Heart right ventricle (tissue), 16 donors: ENCODE measurements at regions of chr1 and their contacts with region 1.

Region 1: DNA sequence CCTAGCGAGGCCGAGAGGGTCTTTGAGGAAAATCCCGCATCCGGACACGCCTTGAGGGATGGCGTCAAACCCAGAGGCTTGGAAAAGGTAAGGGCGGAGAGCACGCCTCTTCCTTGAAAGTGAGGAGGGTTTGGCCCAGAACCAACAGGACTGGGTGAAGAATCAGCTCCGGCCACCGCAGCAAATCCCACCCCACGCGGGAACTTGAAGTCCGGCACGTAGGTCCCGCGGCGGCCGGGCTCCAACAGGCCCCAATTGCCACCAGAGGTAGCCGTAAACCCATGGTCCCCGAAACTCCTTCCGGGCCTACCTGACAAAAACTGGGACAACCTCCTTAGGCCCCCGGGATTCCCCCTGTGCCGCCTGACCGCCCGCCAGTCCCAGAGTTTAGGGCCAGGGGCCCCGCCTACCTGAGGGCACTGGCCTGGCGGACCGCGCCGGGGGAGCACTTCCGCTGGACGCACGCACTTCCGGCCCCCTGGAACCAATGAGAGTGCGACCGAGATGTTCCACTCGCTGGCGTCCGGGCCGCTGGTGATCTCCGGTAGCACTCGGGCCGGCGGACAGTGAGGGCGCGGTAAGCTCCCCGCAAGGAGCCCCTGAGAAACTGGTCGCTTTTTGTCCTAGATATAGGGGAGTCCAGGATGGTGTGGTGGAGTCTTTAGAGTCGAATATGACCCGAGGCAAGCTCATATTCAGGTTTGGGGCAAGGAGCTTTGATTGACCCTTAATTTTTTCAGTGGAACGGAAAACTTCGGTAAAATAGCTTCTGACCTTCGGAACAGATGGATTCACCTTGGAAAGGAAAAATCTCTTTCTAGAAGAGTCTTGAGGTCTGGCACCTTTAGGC is at the starts of genes LZIC and NMNAT1:
- DNase-seq: peak; percentile 92 to 93
- ATAC-seq: peak; percentile 99 to 100 (median 99)
- H3K4me3 ChIP-seq: peak within 1 kb of the TSS; percentile 68 to 93 (median 78)
- H3K27ac ChIP-seq: peak within 1 kb of the TSS; percentile 33 to 97 (median 92)
- H3K4me1 ChIP-seq: peaks cover 4 to 32% (median 18%) of the 10 kb centered on the region in 9 donors
- H3K27me3 ChIP-seq: no peaks in the 10 kb centered on the region
- CTCF ChIP-seq: peak in 1 of 9 donors; percentile 12
- total RNA-seq, gene LZIC: 27.7 to 38.0 (median 34.2) TPM
- total RNA-seq, gene NMNAT1: 14.2 to 23.7 (median 20.3) TPM

Region 2: DNA sequence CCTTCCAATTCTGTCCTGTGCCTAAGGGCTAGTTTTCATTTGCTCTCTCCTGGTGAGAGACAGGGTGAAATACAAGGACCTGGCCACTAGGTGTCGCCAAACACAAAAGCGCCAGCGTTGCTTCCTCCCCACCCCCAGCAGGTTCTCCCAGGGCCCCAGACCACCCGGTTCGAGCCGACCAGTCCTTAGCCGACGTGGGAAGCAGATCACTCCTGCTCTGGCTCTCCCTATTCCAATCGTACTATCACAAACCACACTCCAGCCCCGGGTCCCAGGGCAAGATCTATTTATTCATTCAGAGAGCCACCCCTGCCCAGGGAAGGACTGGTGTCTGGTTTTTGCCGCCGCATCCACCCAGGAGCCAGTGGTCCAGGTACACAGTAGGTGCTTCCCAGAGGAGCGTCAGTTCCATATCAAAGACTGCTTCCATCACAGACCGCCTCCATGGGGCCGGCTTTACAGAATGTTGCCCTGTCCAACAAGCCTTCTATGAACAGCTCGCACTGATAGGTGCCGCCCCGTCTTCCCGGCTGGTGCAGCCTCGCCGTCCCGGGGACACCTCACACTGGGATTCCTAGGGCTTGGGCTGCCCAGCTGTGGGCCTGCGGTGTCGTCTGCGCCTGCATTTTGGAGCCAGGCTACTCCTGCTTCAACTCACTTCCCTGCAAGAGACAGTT is 68.1 kb before region 1 on chr1:
- intact Hi-C with region 1: loop called in 4 of 10 experiments (anchors 1 to 10 kb)
- DNase-seq: peak; percentile 66 to 76
- ATAC-seq: peak; percentile 77 to 92 (median 88)
- H3K4me3 ChIP-seq: peak overlapping the region in 4 of 10 donors; percentile 16 to 26 (median 24)
- H3K27ac ChIP-seq: peak overlapping the region in 9 of 10 donors; percentile 14 to 73 (median 46)
- H3K4me1 ChIP-seq: peaks cover 7 to 49% (median 36%) of the 10 kb centered on the region in 9 donors
- H3K27me3 ChIP-seq: no peaks in the 10 kb centered on the region
- CTCF ChIP-seq: peak; percentile 91 to 95 (median 93)

Region 3: GRCh38 chr1:9984253-9984652 is 41.1 kb after region 1 on chr1:
- intact Hi-C with region 1: no loop called
- DNase-seq: no peak
- ATAC-seq: peak in 5 of 8 donors; percentile 34 to 78 (median 72)
- H3K4me3 ChIP-seq: no peak overlapping the region
- H3K27ac ChIP-seq: peak overlapping the region in 9 of 10 donors; percentile 38 to 75 (median 58)
- H3K4me1 ChIP-seq: peaks cover 0 to 12% (median 0%) of the 10 kb centered on the region in 9 donors
- H3K27me3 ChIP-seq: no peaks in the 10 kb centered on the region
- CTCF ChIP-seq: no peak

Region 4: GRCh38 chr1:10032590-10033358 is 89.6 kb after region 1 on chr1 and contains the start of gene UBE4B:
- intact Hi-C with region 1: loop called in 2 of 10 experiments (anchors 2 kb)
- DNase-seq: peak; percentile 97 to 99
- ATAC-seq: peak; percentile 99 to 100 (median 100)
- H3K4me3 ChIP-seq: peak within 1 kb of the TSS; percentile 87 to 100 (median 98)
- H3K27ac ChIP-seq: peak within 1 kb of the TSS; percentile 85 to 98 (median 95)
- H3K4me1 ChIP-seq: peaks cover 0 to 47% (median 28%) of the 10 kb centered on the region in 9 donors
- H3K27me3 ChIP-seq: no peaks in the 10 kb centered on the region
- CTCF ChIP-seq: peak; percentile 80 to 96 (median 88)
- total RNA-seq, gene UBE4B: 59.0 to 87.3 (median 69.2) TPM

Region 5: GRCh38 chr1:10152709-10153284 is 209.6 kb after region 1 on chr1:
- intact Hi-C with region 1: loop called in 3 of 10 experiments (anchors 10 kb)
- DNase-seq: peak; percentile 18 to 23
- ATAC-seq: peak in 7 of 8 donors; percentile 11 to 50 (median 22)
- H3K4me3 ChIP-seq: no peak overlapping the region
- H3K27ac ChIP-seq: no peak overlapping the region
- H3K4me1 ChIP-seq: peaks cover 0 to 34% (median 5%) of the 10 kb centered on the region in 9 donors
- H3K27me3 ChIP-seq: no peaks in the 10 kb centered on the region
- CTCF ChIP-seq: peak in 8 of 9 donors; percentile 29 to 62 (median 52)

Region 6: DNA sequence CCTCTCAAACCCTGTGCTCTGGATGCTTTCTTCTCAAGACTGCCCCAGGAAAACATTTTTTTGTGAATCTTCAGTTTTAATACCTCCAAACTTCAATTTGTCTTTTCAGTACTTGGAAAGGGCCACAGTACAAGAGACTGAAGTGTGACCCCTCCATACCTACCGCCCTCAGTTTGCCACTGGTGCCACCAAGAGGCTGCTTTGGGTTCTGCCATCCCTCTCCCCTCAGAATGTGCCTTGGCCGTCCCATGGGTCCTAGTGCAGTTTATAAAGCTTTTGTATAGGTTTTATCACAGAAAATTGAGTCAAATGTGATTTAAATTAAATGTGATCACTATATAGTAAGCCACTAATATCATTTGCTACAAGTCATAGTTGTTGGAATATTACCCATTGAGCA is 394.9 kb after region 1 on chr1:
- intact Hi-C with region 1: loop called in 1 of 10 experiments (anchors 10 kb)
- DNase-seq: peak; percentile 40 to 47
- ATAC-seq: peak in 7 of 8 donors; percentile 77 to 92 (median 86)
- H3K4me3 ChIP-seq: no peak overlapping the region
- H3K27ac ChIP-seq: peak overlapping the region in 4 of 10 donors; percentile 37 to 71 (median 55)
- H3K4me1 ChIP-seq: peaks cover 0 to 26% (median 22%) of the 10 kb centered on the region in 9 donors
- H3K27me3 ChIP-seq: no peaks in the 10 kb centered on the region
- CTCF ChIP-seq: peak; percentile 61 to 83 (median 70)